ENCODE measurements at regions of chr4 and their contacts with region 1.

Region 1: GRCh38 chr4:112231779-112232713 is at the start of gene AP1AR:
- DNase-seq: peak; percentile 85 to 91
- ATAC-seq: peak; percentile 79 to 83 (median 81)
- H3K4me3 ChIP-seq: peak within 1 kb of the TSS; percentile 97
- H3K27ac ChIP-seq: peak within 1 kb of the TSS; percentile 99
- H3K4me1 ChIP-seq: peaks cover 27% of the 10 kb centered on the region
- H3K27me3 ChIP-seq: no peaks in the 10 kb centered on the region
- CTCF ChIP-seq: peak; percentile 37
- total RNA-seq, gene AP1AR: 5.3 to 12.1 (median 10.2) TPM

Region 2: GRCh38 chr4:112099701-112100297 is 132.2 kb before region 1 on chr4:
- intact Hi-C with region 1: loop called (anchors 2 kb)
- DNase-seq: no peak
- ATAC-seq: peak in 3 of 4 donors; percentile 68 to 88 (median 68)
- H3K4me3 ChIP-seq: no peak overlapping the region
- H3K27ac ChIP-seq: no peak overlapping the region
- H3K4me1 ChIP-seq: no peaks in the 10 kb centered on the region
- H3K27me3 ChIP-seq: no peaks in the 10 kb centered on the region
- CTCF ChIP-seq: peak; percentile 72

Region 3: GRCh38 chr4:112145326-112145819 is 86.7 kb before region 1 on chr4 and contains the start of gene FAM241A:
- intact Hi-C with region 1: loop called (anchors 2 to 5 kb)
- DNase-seq: peak; percentile 88 to 92
- ATAC-seq: peak; percentile 98 to 99 (median 98)
- H3K4me3 ChIP-seq: peak within 1 kb of the TSS; percentile 94
- H3K27ac ChIP-seq: peak within 1 kb of the TSS; percentile 88
- H3K4me1 ChIP-seq: peaks cover 11% of the 10 kb centered on the region
- H3K27me3 ChIP-seq: no peaks in the 10 kb centered on the region
- CTCF ChIP-seq: no peak
- total RNA-seq, gene FAM241A: 2.6 to 4.8 (median 3.8) TPM

Region 4: GRCh38 chr4:112172180-112172579 is 59.9 kb before region 1 on chr4:
- intact Hi-C with region 1: loop called in 1 of 2 experiments (anchors 2 kb)
- DNase-seq: no peak
- ATAC-seq: no peak
- H3K4me3 ChIP-seq: no peak overlapping the region
- H3K27ac ChIP-seq: no peak overlapping the region
- H3K4me1 ChIP-seq: peaks cover 40% of the 10 kb centered on the region
- H3K27me3 ChIP-seq: no peaks in the 10 kb centered on the region
- CTCF ChIP-seq: no peak

Region 5: GRCh38 chr4:112312610-112313239 is 80.7 kb after region 1 on chr4:
- intact Hi-C with region 1: no loop called
- DNase-seq: no peak
- ATAC-seq: no peak
- H3K4me3 ChIP-seq: no peak overlapping the region
- H3K27ac ChIP-seq: no peak overlapping the region
- H3K4me1 ChIP-seq: no peaks in the 10 kb centered on the region
- H3K27me3 ChIP-seq: no peaks in the 10 kb centered on the region
- CTCF ChIP-seq: no peak

Measured in psoas muscle (tissue), 8 donors.